Mammary epithelial cell (primary cell): ENCODE measurements at regions of chr1 and their contacts with region 1.

Region 1: GRCh38 chr1:211698161-211699026 is 23.0 kb upstream of the NEK2 start:
- DNase-seq: peak; percentile 64
- H3K4me3 ChIP-seq: no peak overlapping the region
- H3K27ac ChIP-seq: no peak overlapping the region
- H3K4me1 ChIP-seq: peaks cover 5% of the 10 kb centered on the region
- H3K27me3 ChIP-seq: no peaks in the 10 kb centered on the region
- CTCF ChIP-seq: peak; percentile 91 to 99

Region 2: DNA sequence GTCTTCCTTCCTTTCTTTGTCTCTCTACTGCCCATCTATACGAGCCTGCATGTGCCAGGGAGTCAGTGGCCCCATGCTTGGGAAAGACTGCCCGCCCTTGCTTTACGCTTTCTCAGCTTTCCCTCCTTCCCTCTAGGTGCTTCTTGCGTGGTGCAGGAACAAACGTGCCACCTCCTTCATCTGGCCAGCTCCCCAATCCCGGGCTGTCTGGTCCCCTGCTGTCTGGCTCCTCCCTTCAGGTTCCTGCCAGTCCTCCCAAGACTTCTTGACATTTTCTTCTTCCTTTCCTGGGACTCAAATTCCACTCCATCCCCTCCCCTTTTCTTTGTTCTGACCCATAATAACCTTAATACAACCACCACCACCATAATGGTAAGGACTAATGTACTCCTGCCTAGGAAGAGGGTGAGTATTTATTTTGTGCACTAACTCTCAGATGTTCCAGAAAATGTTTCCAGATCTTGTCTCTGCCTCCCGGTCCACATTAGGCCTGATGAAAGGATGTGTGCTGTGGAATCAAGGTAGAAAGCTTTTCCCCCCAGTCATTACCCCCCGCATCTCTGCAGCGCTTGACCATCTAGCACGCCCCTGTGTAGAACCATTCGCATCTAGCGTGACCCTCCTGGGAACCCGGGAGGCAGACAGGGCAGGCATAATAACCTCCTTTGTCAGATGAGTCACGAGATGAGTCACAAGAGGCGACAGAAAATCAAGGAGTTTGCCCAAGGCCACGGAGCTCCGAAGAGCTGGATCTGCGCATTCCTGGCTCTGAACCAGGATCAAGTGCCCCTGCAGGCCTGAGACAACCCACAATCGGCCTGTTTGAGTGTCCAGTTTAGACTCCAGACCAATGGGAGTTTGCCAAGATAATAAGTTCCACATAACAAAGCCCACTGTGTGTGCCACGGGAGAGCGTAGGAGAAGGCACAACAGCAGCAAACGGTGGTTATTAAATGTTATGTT is 37.1 kb after region 1 on chr1:
- CTCF ChIA-PET with region 1: no interaction called
- dilution Hi-C with region 1: no loop called
- in situ Hi-C with region 1: no loop called
- intact Hi-C with region 1: loop called (anchors 5 kb)
- DNase-seq: peak; percentile 85
- H3K4me3 ChIP-seq: no peak overlapping the region
- H3K27ac ChIP-seq: no peak overlapping the region
- H3K4me1 ChIP-seq: peaks cover 28% of the 10 kb centered on the region
- H3K27me3 ChIP-seq: no peaks in the 10 kb centered on the region
- CTCF ChIP-seq: no peak

Region 3: DNA sequence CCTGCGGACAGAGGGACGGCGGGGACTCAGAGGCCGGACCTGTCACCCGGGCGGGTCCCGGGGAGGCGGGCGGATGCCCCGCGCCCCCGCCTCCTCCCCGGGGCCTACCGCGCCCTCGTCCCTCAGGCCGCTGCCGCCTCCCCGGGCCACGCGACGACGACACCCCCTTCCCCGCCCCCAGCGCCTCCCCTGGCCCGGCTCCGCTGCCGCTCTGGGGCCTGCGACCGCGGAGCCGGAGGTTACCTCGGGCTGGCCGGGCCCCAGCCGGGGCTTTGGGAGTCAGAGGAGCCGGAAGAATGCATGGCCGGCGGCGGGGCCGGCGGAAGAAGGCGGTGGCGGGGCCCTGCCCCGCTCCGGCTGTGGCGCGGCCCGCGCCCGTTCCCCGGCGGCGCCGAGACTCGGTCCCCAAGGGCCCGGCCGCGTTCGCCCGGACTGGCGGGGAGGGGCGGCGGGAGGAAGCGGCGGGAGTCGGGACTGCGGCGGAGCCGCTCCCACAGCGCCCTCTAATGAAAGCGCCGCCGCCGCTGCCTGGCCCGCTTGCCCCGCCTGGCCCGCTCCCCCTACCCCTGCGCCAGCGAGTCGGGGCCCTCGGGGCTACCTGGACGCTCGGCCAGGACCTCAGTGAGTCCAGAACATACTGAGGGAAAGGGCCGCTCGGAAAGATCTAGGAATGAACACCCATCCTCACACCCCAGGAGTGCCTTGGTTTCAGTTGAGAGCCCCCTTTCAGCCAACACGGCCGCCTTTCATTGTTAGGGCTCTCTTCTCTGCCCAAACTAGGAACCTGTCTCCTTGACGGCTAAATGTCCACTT is 132.1 kb after region 1 on chr1 and contains the start of gene LPGAT1:
- CTCF ChIA-PET with region 1: no interaction called
- dilution Hi-C with region 1: no loop called
- in situ Hi-C with region 1: loop called in 1 of 2 experiments (anchors 10 kb)
- intact Hi-C with region 1: loop called (anchors 1 kb)
- DNase-seq: peak; percentile 53
- H3K4me3 ChIP-seq: peak within 1 kb of the TSS; percentile 69 to 84 (median 75)
- H3K27ac ChIP-seq: peak within 1 kb of the TSS; percentile 44
- H3K4me1 ChIP-seq: peaks cover 15% of the 10 kb centered on the region
- H3K27me3 ChIP-seq: no peaks in the 10 kb centered on the region
- CTCF ChIP-seq: peak; percentile 19 to 59
- total RNA-seq, gene LPGAT1: 42.0 to 44.5 TPM